GM10248 (cell line): ENCODE measurements at regions of chr12 and their contacts with region 1.

Region 1: DNA sequence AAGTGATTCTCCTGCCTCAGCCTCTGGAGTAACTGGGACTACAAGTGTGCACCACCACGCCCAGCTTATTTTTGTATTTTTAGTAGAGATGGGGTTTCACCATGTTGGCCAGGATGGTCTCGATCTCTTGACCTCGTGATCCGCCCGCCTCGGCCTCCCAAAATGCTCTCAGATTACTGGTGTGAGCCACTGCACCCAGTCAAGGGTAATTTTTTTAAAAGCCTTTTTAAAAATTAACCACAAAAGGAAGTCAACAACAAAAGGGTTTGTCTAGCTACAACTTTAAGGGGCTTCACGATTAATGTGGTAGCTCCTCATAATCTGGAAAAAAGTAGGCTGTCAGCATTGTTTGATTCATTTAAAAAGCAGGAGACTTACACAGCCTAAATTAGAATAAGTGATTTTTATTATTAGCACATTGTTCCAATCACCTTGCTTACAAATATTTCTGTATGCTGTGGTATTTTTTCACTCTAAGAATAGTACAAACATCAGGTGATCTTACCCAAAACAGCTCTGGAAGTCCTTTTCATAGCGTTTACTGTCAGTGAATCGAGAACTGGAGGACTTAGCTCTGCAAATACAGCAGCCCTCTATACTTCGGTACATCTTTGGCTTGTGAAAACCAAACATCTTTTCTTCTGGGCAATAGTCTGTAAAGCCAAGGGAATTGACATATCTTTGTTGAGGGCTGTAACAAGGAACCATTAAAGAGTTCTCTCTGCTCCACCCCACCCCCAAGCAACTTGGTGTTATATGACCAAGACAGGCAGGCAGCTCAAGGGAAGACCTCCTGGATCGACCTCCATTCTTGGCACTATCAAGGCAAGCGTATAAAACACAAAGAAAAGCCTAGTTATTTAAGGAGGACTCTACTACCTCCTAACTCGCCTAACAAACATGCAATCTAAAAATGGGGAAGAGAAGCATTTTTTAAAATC is 28.1 kb downstream of the SINHCAF start:
- DNase-seq: no peak
- CTCF ChIP-seq: no peak

Region 2: GRCh38 chr12:31315089-31315715 is 17.4 kb after region 1 on chr12:
- CTCF ChIA-PET with region 1: interaction called, 11 read pairs
- POLR2A ChIA-PET with region 1: no interaction called
- DNase-seq: no peak
- CTCF ChIP-seq: no peak

Region 3: DNA sequence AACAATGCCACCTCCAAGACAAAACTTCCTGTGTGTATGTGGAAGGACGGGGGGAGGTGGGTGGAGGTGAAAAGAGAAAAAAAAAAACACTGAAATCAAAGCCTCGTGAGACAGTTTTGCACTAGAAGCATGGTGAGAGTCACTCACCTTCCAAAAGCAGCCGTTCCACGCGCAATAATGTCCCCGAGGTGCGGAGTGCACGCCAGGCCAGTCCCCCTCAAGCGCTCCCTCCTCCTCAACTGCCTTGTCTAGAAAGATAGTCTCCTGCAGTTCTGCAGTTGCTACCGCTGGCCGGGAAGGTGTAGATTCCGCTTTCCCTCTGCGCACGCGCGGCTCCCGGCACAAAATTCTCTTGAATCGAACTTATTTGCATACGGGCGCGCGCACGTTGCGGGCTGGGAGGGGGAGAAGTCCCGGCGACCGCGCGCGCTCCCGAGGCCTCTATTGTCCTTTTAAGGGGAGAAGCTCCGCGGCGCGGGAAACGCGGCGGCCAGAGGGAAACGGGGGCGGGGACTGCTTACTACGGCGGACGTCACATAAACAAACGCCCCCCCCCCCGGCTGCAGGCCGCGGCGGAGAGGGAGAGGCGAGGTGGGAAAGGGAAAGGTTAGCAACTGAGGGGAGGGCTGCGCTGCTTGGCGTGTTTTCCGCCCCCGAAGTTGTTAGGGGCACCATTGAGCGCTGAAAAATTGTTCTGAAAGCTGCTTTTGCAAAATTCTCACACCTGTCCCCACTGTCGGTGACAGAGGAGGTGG is 28.2 kb after region 1 on chr12 and contains the start of gene SINHCAF:
- CTCF ChIA-PET with region 1: interaction called, 11 read pairs
- POLR2A ChIA-PET with region 1: interaction called, 4 read pairs
- DNase-seq: peak; percentile 94
- CTCF ChIP-seq: no peak